Aorta (tissue), 5 donors: ENCODE measurements at regions of chr9 and their contacts with region 1.

Region 1: DNA sequence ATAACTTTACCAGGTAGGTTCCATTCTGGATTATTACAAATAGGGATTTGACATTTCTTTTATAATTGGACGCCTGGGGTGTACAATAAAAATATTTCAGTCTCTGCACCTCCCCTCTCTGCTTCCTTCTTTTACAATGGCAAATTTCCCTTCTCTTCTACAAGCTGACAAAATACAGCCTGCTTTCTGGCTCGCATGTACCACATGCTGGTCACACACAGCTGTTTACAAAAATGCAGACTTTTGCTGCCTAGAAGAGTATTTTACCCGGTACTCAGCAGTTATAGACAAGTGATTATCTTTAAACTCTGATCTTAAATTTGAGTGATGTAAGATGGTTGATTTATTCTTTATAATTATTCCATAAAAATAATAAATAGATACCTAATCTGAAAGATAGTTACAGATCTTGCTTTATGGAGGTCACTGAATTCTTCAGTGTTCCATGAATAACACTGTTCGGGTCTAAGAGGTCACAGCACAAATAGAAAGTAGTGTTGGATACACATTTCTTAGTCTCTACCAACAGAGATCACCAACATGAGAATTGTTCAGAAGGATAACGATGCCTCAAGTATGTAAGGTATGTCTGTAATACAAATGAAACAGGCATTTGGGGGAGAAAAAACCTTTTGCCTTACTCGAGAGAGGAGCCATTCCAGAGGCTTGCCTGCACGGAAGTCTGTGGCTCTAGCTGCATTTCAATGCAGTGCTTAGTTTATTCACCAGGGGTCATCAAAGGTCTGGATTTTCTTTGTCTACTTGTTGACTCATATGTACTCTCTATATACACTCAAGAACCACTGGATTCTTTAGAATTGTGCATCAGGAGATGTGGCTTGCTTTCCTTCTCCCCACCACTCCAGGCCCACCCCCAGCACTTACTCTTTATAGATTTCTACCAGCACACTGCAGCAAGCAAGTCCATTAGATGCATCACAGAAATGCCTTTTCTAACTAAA is 206.6 kb upstream of the RFX3 start:
- DNase-seq: no peak
- ATAC-seq: peak; percentile 92
- H3K4me3 ChIP-seq: peak overlapping the region in 1 of 2 donors; percentile 41
- H3K27ac ChIP-seq: no peak overlapping the region
- H3K4me1 ChIP-seq: no peaks in the 10 kb centered on the region
- H3K27me3 ChIP-seq: no peaks in the 10 kb centered on the region

Region 2: DNA sequence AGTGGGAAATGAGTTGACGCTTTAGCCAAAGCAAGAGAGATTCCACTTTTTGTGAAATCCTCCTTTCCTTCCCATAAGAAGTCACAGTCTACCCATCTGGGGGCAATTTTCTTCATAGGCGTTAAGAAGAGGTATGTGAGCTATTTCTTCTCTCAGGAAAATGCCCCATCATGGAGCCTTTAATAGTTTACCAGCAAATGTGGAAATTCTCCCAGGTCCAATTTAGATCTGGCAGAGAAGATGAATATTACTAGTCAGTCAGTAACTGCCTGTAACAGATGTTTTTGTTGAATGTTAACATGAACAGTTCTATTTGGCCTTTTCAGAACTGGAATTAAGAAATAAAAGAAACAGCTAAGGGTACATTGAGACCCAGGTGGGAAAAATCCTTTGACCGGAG is 50.2 kb before region 1 on chr9:
- intact Hi-C with region 1: no loop called
- DNase-seq: no peak
- ATAC-seq: no peak
- H3K4me3 ChIP-seq: no peak overlapping the region
- H3K27ac ChIP-seq: no peak overlapping the region
- H3K4me1 ChIP-seq: no peaks in the 10 kb centered on the region
- H3K27me3 ChIP-seq: no peaks in the 10 kb centered on the region

Region 3: GRCh38 chr9:4077499-4078102 is 345.2 kb after region 1 on chr9:
- intact Hi-C with region 1: loop called in 1 of 2 experiments (anchors 10 kb)
- DNase-seq: peak; percentile 92 to 93
- ATAC-seq: peak; percentile 91
- H3K4me3 ChIP-seq: no peak overlapping the region
- H3K27ac ChIP-seq: peak overlapping the region in 1 of 2 donors; percentile 50
- H3K4me1 ChIP-seq: peaks cover 0 to 3% of the 10 kb centered on the region in 2 donors
- H3K27me3 ChIP-seq: no peaks in the 10 kb centered on the region

Region 4: GRCh38 chr9:4235871-4236804 is 503.8 kb after region 1 on chr9:
- intact Hi-C with region 1: loop called in 1 of 2 experiments (anchors 10 kb)
- DNase-seq: no peak
- ATAC-seq: no peak
- H3K4me3 ChIP-seq: no peak overlapping the region
- H3K27ac ChIP-seq: no peak overlapping the region
- H3K4me1 ChIP-seq: peaks cover 0 to 8% of the 10 kb centered on the region in 2 donors
- H3K27me3 ChIP-seq: no peaks in the 10 kb centered on the region

Region 5: DNA sequence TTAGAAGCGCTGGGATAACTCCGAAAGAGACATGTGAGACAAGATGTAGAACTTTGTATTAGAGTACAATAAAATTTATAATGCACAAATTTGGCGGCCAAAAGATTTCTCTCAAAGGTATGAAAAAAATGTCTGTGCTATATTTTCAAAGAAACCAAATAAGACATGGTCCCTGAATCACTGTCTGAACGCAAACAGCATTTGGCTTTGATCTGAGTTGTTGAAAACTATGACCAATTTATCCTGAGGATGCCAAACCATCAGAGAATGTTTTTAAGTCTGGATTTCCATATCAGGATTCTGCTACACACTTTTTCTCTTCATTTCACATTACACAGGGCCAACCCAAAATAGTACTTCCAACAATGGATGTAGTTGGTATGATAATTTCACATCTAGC is 577.4 kb after region 1 on chr9:
- intact Hi-C with region 1: loop called in 1 of 2 experiments (anchors 5 kb)
- DNase-seq: no peak
- ATAC-seq: no peak
- H3K4me3 ChIP-seq: no peak overlapping the region
- H3K27ac ChIP-seq: no peak overlapping the region
- H3K4me1 ChIP-seq: no peaks in the 10 kb centered on the region
- H3K27me3 ChIP-seq: no peaks in the 10 kb centered on the region

Region 6: GRCh38 chr9:4339357-4339756 is 607.0 kb after region 1 on chr9:
- intact Hi-C with region 1: loop called (anchors 2 to 10 kb)
- DNase-seq: peak; percentile 84 to 94
- ATAC-seq: peak; percentile 59
- H3K4me3 ChIP-seq: no peak overlapping the region
- H3K27ac ChIP-seq: no peak overlapping the region
- H3K4me1 ChIP-seq: no peaks in the 10 kb centered on the region
- H3K27me3 ChIP-seq: no peaks in the 10 kb centered on the region

Region 7: DNA sequence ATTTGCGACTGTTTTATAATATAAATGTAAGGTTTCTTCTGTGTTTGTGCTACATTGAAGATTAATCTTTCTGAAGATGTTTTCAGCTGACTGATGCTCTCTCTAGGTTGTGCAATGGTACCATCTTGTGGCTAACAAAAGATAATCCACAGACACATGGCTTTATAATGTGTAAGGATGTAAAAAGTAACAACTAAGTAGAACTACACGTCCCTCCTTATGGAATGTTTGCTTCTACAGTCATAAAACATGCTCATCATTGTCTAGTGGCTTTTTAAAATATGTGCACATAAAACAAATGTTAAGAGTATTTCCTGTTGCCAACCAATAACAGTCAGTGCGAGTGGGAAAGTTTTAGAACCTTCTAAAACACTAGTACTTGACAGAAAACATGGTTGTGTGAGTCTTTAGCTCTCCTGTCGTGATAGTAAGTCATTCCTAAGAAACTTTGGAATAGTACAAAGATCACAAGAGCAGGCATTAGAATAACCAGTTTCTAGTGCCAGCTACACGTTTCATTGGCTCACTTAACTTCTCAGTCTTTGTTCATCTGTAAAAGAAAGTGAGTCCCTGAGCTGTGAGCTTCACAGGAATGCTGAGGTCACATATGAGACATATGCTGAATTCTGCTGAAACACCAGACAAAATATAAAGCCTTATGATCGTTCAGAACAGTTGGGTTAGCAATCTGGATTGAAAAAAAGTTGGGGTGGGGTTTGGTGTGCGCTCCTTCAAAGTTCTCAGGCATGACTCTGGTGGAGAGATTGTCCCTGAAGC is 643.3 kb after region 1 on chr9:
- intact Hi-C with region 1: loop called in 1 of 2 experiments (anchors 5 kb)
- DNase-seq: no peak
- ATAC-seq: no peak
- H3K4me3 ChIP-seq: no peak overlapping the region
- H3K27ac ChIP-seq: no peak overlapping the region
- H3K4me1 ChIP-seq: no peaks in the 10 kb centered on the region
- H3K27me3 ChIP-seq: no peaks in the 10 kb centered on the region